Breast epithelium (tissue), 4 donors: ENCODE measurements at regions of chr4 and their contacts with region 1.

Region 1: GRCh38 chr4:166957451-166957850 is 276.8 kb downstream of the SPOCK3 start:
- DNase-seq: no peak
- H3K4me3 ChIP-seq: no peak overlapping the region
- H3K27ac ChIP-seq: no peak overlapping the region
- H3K4me1 ChIP-seq: no peaks in the 10 kb centered on the region
- H3K27me3 ChIP-seq: no peaks in the 10 kb centered on the region
- CTCF ChIP-seq: no peak
- POLR2A ChIP-seq: no peak

Region 2: DNA sequence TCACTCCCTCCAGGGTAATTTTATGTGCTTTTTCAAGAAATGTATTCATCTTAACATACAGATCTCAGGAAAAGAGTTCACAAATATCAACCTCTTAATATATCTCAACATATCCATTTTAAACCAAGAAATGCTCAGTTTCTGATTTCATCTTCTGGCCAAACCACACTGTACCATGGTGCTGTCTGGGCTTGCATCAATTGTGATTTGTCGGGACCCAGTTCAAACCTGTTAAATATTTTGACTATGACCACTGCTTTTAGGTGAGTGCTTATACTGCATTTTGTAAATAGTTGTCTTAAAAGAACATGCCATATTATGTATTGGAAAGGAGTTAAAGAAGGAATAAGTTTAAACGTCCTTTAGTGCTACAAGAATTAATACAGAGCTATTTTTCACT is 75.2 kb before region 1 on chr4:
- intact Hi-C with region 1: loop called (anchors 5 kb)
- DNase-seq: no peak
- H3K4me3 ChIP-seq: no peak overlapping the region
- H3K27ac ChIP-seq: no peak overlapping the region
- H3K4me1 ChIP-seq: no peaks in the 10 kb centered on the region
- H3K27me3 ChIP-seq: no peaks in the 10 kb centered on the region
- CTCF ChIP-seq: no peak
- POLR2A ChIP-seq: no peak